PC-3 (cell line): ENCODE measurements at regions of chr1 and their contacts with region 1.

Region 1: DNA sequence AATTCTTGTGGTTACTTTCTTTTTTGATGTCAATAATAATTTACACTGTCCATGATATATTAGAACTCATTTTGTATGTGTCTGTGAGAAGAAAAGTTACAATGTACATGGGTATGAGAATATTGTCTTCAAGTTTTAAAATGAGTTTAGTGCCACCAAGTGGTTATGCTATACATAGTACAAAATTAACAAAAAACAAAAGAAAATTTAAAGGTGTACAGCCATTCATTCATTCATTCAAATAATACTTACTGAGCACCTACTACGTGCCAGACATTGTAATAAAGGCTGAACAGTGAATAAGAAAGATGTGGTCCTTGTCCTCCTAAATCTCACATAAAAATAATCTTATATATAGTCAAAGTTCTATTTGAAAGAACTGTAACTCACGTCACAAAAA is 27.7 kb downstream of the UCHL5 start:
- DNase-seq: peak; percentile 20
- ATAC-seq: peak; percentile 22; the same call in 1 of the 2 replicates
- H3K4me3 ChIP-seq: no peak overlapping the region
- H3K27ac ChIP-seq: no peak overlapping the region
- H3K4me1 ChIP-seq: no peaks in the 10 kb centered on the region
- H3K27me3 ChIP-seq: no peaks in the 10 kb centered on the region
- CTCF ChIP-seq: peak; percentile 56

Region 2: GRCh38 chr1:192609110-192610079 is 422.0 kb before region 1 on chr1:
- CTCF ChIA-PET with region 1: no interaction called
- POLR2A ChIA-PET with region 1: no interaction called
- intact Hi-C with region 1: loop called (anchors 10 kb)
- DNase-seq: no peak
- ATAC-seq: no peak
- H3K4me3 ChIP-seq: no peak overlapping the region
- H3K27ac ChIP-seq: no peak overlapping the region
- H3K4me1 ChIP-seq: no peaks in the 10 kb centered on the region
- H3K27me3 ChIP-seq: no peaks in the 10 kb centered on the region
- CTCF ChIP-seq: no peak

Region 3: GRCh38 chr1:192700834-192701271 is 330.6 kb before region 1 on chr1:
- CTCF ChIA-PET with region 1: no interaction called
- POLR2A ChIA-PET with region 1: no interaction called
- intact Hi-C with region 1: no loop called
- DNase-seq: peak; percentile 73
- ATAC-seq: peak; percentile 41
- H3K4me3 ChIP-seq: peak overlapping the region; percentile 32; the same call in 1 of the 2 replicates
- H3K27ac ChIP-seq: peak overlapping the region; percentile 83
- H3K4me1 ChIP-seq: peaks cover 41% of the 10 kb centered on the region
- H3K27me3 ChIP-seq: no peaks in the 10 kb centered on the region
- CTCF ChIP-seq: no peak

Region 4: GRCh38 chr1:192974701-192975100 is 56.7 kb before region 1 on chr1:
- CTCF ChIA-PET with region 1: no interaction called
- POLR2A ChIA-PET with region 1: no interaction called
- intact Hi-C with region 1: no loop called
- DNase-seq: no peak
- ATAC-seq: peak; percentile 35
- H3K4me3 ChIP-seq: no peak overlapping the region
- H3K27ac ChIP-seq: no peak overlapping the region
- H3K4me1 ChIP-seq: peaks cover 5% of the 10 kb centered on the region; the same call in 1 of the 2 replicates
- H3K27me3 ChIP-seq: no peaks in the 10 kb centered on the region
- CTCF ChIP-seq: no peak

Region 5: DNA sequence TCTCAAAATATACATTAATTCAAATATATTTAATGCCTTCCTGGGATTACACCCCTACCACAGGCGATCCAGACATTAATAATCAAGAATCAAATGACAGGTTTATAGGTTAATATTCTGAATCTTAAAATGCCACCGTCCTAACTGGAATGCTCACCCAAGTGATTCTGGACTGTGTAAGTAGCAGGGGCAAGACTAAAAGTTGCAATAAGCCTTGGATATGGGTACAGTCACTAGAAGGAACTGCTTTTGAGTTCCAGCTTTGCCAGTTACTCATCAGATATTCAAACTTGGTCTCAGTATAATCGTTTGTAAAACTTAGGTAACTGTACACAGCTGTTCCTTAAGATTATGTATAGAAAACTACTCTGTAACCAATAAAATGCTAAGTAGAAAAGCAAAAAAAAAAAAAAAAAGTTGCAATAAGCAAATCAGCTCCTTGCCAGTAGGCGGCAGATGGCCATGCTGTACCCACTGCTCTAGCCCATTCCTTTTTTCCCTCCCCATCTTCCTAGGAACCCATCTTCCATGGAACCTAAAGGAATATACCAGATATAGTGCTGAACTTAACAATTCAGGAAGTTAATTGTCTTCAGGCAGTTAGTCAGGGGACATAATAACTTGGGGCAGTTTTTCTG is 38.4 kb after region 1 on chr1:
- CTCF ChIA-PET with region 1: interaction called, 10 read pairs
- POLR2A ChIA-PET with region 1: no interaction called
- intact Hi-C with region 1: no loop called
- DNase-seq: peak; percentile 15
- ATAC-seq: no peak
- H3K4me3 ChIP-seq: no peak overlapping the region
- H3K27ac ChIP-seq: no peak overlapping the region
- H3K4me1 ChIP-seq: no peaks in the 10 kb centered on the region
- H3K27me3 ChIP-seq: no peaks in the 10 kb centered on the region
- CTCF ChIP-seq: peak; percentile 51